Psoas muscle (tissue), 8 donors: ENCODE measurements at regions of chrX and their contacts with region 1.

Region 1: GRCh38 chrX:16719334-16720084 is at the start of gene SYAP1:
- DNase-seq: peak; percentile 97 to 99
- ATAC-seq: peak; percentile 95 to 97 (median 97)
- H3K4me3 ChIP-seq: peak within 1 kb of the TSS; percentile 75
- H3K27ac ChIP-seq: peak within 1 kb of the TSS; percentile 91
- H3K4me1 ChIP-seq: peaks cover 13% of the 10 kb centered on the region
- H3K27me3 ChIP-seq: peaks cover 0 to under 1% (median 0%) of the 10 kb centered on the region in 3 donors
- CTCF ChIP-seq: no peak
- total RNA-seq, gene SYAP1: 13.7 to 29.4 (median 20.0) TPM

Region 2: GRCh38 chrX:16469870-16470269 is 249.6 kb before region 1 on chrX:
- intact Hi-C with region 1: no loop called
- DNase-seq: no peak
- ATAC-seq: no peak
- H3K4me3 ChIP-seq: no peak overlapping the region
- H3K27ac ChIP-seq: no peak overlapping the region
- H3K4me1 ChIP-seq: no peaks in the 10 kb centered on the region
- H3K27me3 ChIP-seq: no peaks in the 10 kb centered on the region
- CTCF ChIP-seq: no peak

Region 3: DNA sequence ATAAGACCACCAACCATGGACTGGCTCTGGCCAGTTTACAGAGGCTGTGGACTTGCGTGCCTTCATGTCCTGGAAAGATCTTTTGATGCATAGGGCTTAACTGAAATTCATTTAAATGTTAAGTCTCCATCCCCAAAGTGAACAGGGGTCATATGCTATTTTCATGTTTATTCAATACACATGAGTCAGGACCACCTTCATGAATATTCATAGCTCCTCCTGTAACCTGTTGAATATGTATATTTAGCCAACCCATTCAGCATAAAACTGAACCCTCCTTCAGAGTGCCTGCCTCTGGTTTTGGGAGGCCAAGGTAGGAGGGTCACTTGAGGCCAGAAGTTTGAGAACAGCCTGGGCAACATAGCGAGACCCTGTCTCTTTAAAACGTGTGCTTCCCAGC is 14.1 kb before region 1 on chrX:
- intact Hi-C with region 1: no loop called
- DNase-seq: no peak
- ATAC-seq: no peak
- H3K4me3 ChIP-seq: no peak overlapping the region
- H3K27ac ChIP-seq: no peak overlapping the region
- H3K4me1 ChIP-seq: no peaks in the 10 kb centered on the region
- H3K27me3 ChIP-seq: peaks cover 0 to 19% (median 0%) of the 10 kb centered on the region in 3 donors
- CTCF ChIP-seq: no peak

Region 4: GRCh38 chrX:16786139-16786790 is 66.8 kb after region 1 on chrX and contains the start of gene TXLNG:
- intact Hi-C with region 1: loop called (anchors 5 to 10 kb)
- DNase-seq: peak; percentile 99
- ATAC-seq: peak; percentile 98 to 99 (median 99)
- H3K4me3 ChIP-seq: peak within 1 kb of the TSS; percentile 87
- H3K27ac ChIP-seq: peak within 1 kb of the TSS; percentile 95
- H3K4me1 ChIP-seq: no peaks in the 10 kb centered on the region
- H3K27me3 ChIP-seq: no peaks in the 10 kb centered on the region
- CTCF ChIP-seq: no peak
- total RNA-seq, gene TXLNG: 6.3 to 10.1 (median 9.4) TPM